ENCODE measurements at regions of chr9 and their contacts with region 1.

Region 1: GRCh38 chr9:96854073-96854876 is at the start of gene ZNF782:
- DNase-seq: peak; percentile 92
- H3K4me3 ChIP-seq: peak within 1 kb of the TSS; percentile 90
- H3K27ac ChIP-seq: peak within 1 kb of the TSS; percentile 24
- H3K4me1 ChIP-seq: peaks cover 18% of the 10 kb centered on the region
- CTCF ChIP-seq: no peak
- total RNA-seq, gene ZNF782: 8.6 and 14.3 TPM in 2 replicates

Region 2: GRCh38 chr9:96638606-96639364 is 215.5 kb before region 1 on chr9:
- CTCF ChIA-PET with region 1: no interaction called
- POLR2A ChIA-PET with region 1: no interaction called
- intact Hi-C with region 1: no loop called
- DNase-seq: no peak
- H3K4me3 ChIP-seq: no peak overlapping the region
- H3K27ac ChIP-seq: no peak overlapping the region
- H3K4me1 ChIP-seq: no peaks in the 10 kb centered on the region
- CTCF ChIP-seq: no peak

Region 3: DNA sequence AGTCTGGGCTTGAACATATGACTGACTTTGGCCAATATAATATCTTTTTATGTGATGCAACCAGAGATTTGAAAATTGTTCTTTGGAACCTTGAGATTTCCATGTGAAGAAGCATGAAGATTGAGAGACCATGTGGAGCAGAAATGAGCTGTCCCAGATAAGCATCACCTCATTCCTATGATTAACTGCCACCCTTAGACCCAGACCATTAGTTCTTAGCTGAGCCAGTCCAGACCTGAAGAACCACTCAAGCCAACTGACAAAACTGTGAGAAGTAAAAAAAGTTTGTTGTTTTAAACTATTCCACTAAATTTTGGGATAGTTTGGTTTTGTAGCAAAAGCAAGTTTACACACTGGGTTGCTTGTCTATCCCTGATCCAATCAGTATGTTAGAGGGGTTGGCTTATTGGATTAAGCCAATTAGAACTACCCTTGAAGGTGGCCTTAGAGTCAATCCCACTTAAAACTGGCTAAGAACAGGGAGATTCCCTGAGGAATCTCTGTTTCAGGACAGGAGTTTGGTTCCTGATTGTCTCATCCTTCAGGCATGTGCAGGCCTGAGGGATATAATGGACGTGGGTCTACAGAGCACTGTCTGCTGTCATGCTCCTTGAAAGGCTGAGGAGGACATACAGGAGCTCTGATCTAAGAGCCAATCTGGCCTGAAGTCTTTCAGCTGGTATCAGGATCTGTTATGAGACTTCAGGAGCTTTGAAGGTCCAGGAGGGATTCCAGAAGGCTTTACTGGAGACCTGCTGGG is 163.1 kb before region 1 on chr9:
- CTCF ChIA-PET with region 1: no interaction called
- POLR2A ChIA-PET with region 1: no interaction called
- intact Hi-C with region 1: no loop called
- DNase-seq: no peak
- H3K4me3 ChIP-seq: no peak overlapping the region
- H3K27ac ChIP-seq: no peak overlapping the region
- H3K4me1 ChIP-seq: no peaks in the 10 kb centered on the region
- CTCF ChIP-seq: no peak

Region 4: DNA sequence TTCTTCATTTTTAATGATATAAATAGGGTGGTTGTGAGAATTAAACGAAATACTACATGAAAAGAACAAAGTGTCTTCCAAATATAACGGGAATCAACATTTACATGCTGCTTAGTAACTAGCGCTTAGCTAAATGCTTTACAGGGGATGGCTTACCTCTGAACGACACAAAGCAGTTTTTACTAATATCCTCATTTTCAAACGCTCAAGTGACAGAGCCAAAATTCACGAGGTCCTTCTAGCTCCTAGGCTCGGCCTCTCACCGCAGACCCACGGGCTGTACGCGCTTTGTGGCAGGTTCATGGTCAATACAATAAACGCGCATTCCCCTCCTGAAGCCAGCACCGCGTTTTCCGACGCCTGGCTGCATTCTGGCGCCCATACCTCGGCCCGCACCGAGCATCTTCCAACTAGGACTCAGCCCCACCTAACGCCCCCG is 76.8 kb before region 1 on chr9:
- CTCF ChIA-PET with region 1: no interaction called
- POLR2A ChIA-PET with region 1: interaction called, 3 read pairs
- intact Hi-C with region 1: loop called (anchors 5 kb)
- DNase-seq: no peak
- H3K4me3 ChIP-seq: peak overlapping the region; percentile 74
- H3K27ac ChIP-seq: peak overlapping the region; percentile 27
- H3K4me1 ChIP-seq: peaks cover 16% of the 10 kb centered on the region
- CTCF ChIP-seq: no peak

Region 5: GRCh38 chr9:97284798-97285197 is 430.5 kb after region 1 on chr9:
- CTCF ChIA-PET with region 1: no interaction called
- POLR2A ChIA-PET with region 1: no interaction called
- intact Hi-C with region 1: loop called (anchors 10 kb)
- DNase-seq: no peak
- H3K4me3 ChIP-seq: no peak overlapping the region
- H3K27ac ChIP-seq: no peak overlapping the region
- H3K4me1 ChIP-seq: no peaks in the 10 kb centered on the region
- CTCF ChIP-seq: peak; percentile 66

Region 6: GRCh38 chr9:97386733-97387503 is 532.6 kb after region 1 on chr9:
- CTCF ChIA-PET with region 1: no interaction called
- POLR2A ChIA-PET with region 1: no interaction called
- intact Hi-C with region 1: loop called (anchors 2 kb)
- DNase-seq: peak; percentile 58
- H3K4me3 ChIP-seq: no peak overlapping the region
- H3K27ac ChIP-seq: no peak overlapping the region
- H3K4me1 ChIP-seq: no peaks in the 10 kb centered on the region
- CTCF ChIP-seq: peak; percentile 90

Region 7: GRCh38 chr9:97598461-97599288 is 744.4 kb after region 1 on chr9:
- CTCF ChIA-PET with region 1: interaction called, 3 read pairs
- POLR2A ChIA-PET with region 1: no interaction called
- intact Hi-C with region 1: loop called (anchors 5 kb)
- DNase-seq: peak; percentile 84
- H3K4me3 ChIP-seq: no peak overlapping the region
- H3K27ac ChIP-seq: no peak overlapping the region
- H3K4me1 ChIP-seq: peaks cover 8% of the 10 kb centered on the region
- CTCF ChIP-seq: peak; percentile 92

Region 8: GRCh38 chr9:97740848-97741821 is 886.9 kb after region 1 on chr9:
- CTCF ChIA-PET with region 1: no interaction called
- POLR2A ChIA-PET with region 1: no interaction called
- intact Hi-C with region 1: no loop called
- DNase-seq: no peak
- H3K4me3 ChIP-seq: no peak overlapping the region
- H3K27ac ChIP-seq: no peak overlapping the region
- H3K4me1 ChIP-seq: no peaks in the 10 kb centered on the region
- CTCF ChIP-seq: no peak